Ascending aorta (tissue), 2 donors: ENCODE measurements at regions of chr17 and their contacts with region 1.

Region 1: GRCh38 chr17:1005361-1005946 is 8.5 kb downstream of the TIMM22 start:
- DNase-seq: peak in 1 of 2 donors; percentile 83
- H3K4me3 ChIP-seq: peak overlapping the region in 1 of 2 donors; percentile 34
- H3K27ac ChIP-seq: peak overlapping the region; percentile 74 to 89
- H3K4me1 ChIP-seq: peaks cover 63 to 88% of the 10 kb centered on the region in 2 donors
- H3K27me3 ChIP-seq: no peaks in the 10 kb centered on the region
- CTCF ChIP-seq: no peak

Region 2: DNA sequence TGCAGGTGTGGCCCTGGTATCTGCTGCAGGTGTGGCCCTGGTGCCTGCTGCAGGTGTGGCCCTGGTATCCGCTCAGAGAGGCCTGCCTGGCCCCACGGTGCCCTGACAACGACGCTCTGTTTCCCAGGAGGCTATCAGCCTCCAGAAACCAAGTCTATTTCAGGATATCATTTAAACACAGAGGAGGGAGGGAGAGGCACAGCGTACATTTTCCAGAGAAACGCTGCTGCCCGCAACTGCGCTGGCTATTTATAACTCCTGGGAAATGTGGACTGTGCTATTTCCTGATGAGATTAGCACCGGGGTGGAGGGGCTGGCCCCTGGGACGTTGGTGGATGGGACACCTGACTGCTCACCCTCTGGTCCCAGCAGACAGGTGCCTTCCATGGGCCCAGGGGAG is 14.0 kb after region 1 on chr17:
- intact Hi-C with region 1: loop called (anchors 1 kb)
- DNase-seq: peak; percentile 37 to 88
- H3K4me3 ChIP-seq: peak overlapping the region; percentile 16 to 42
- H3K27ac ChIP-seq: peak overlapping the region; percentile 94
- H3K4me1 ChIP-seq: peaks cover 24 to 44% of the 10 kb centered on the region in 2 donors
- H3K27me3 ChIP-seq: no peaks in the 10 kb centered on the region
- CTCF ChIP-seq: no peak

Region 3: GRCh38 chr17:1031711-1032110 is 26.3 kb after region 1 on chr17:
- intact Hi-C with region 1: loop called (anchors 2 kb)
- DNase-seq: peak in 1 of 2 donors; percentile 78
- H3K4me3 ChIP-seq: peak overlapping the region; percentile 51 to 68
- H3K27ac ChIP-seq: peak overlapping the region; percentile 73 to 81
- H3K4me1 ChIP-seq: peaks cover 12 to 41% of the 10 kb centered on the region in 2 donors
- H3K27me3 ChIP-seq: no peaks in the 10 kb centered on the region
- CTCF ChIP-seq: no peak

Region 4: GRCh38 chr17:1055751-1056645 is 50.5 kb after region 1 on chr17:
- intact Hi-C with region 1: no loop called
- DNase-seq: peak in 1 of 2 donors; percentile 85
- H3K4me3 ChIP-seq: no peak overlapping the region
- H3K27ac ChIP-seq: peak overlapping the region; percentile 50 to 56
- H3K4me1 ChIP-seq: peaks cover 0 to 3% of the 10 kb centered on the region in 2 donors
- H3K27me3 ChIP-seq: no peaks in the 10 kb centered on the region
- CTCF ChIP-seq: peak; percentile 76 to 79 (median 77)

Region 5: GRCh38 chr17:1108861-1109605 is 103.6 kb after region 1 on chr17:
- intact Hi-C with region 1: loop called (anchors 5 kb)
- DNase-seq: peak in 1 of 2 donors; percentile 76
- H3K4me3 ChIP-seq: peak overlapping the region; percentile 86
- H3K27ac ChIP-seq: peak overlapping the region; percentile 90 to 99
- H3K4me1 ChIP-seq: peaks cover 29 to 74% of the 10 kb centered on the region in 2 donors
- H3K27me3 ChIP-seq: no peaks in the 10 kb centered on the region
- CTCF ChIP-seq: no peak

Region 6: GRCh38 chr17:1153795-1154546 is 148.5 kb after region 1 on chr17:
- intact Hi-C with region 1: no loop called
- DNase-seq: peak in 1 of 2 donors; percentile 92
- H3K4me3 ChIP-seq: peak overlapping the region in 1 of 2 donors; percentile 36
- H3K27ac ChIP-seq: peak overlapping the region; percentile 22 to 38
- H3K4me1 ChIP-seq: peaks cover 0 to 8% of the 10 kb centered on the region in 2 donors
- H3K27me3 ChIP-seq: no peaks in the 10 kb centered on the region
- CTCF ChIP-seq: no peak